PC-3 (cell line): ENCODE measurements at regions of chr10 and their contacts with region 1.

Region 1: GRCh38 chr10:97463363-97464132 is 17.6 kb downstream of the ZDHHC16 start:
- DNase-seq: peak; percentile 72
- ATAC-seq: peak; percentile 59
- H3K4me3 ChIP-seq: no peak overlapping the region
- H3K27ac ChIP-seq: no peak overlapping the region
- H3K4me1 ChIP-seq: peaks cover 11% of the 10 kb centered on the region
- H3K27me3 ChIP-seq: no peaks in the 10 kb centered on the region
- CTCF ChIP-seq: peak; percentile 84

Region 2: DNA sequence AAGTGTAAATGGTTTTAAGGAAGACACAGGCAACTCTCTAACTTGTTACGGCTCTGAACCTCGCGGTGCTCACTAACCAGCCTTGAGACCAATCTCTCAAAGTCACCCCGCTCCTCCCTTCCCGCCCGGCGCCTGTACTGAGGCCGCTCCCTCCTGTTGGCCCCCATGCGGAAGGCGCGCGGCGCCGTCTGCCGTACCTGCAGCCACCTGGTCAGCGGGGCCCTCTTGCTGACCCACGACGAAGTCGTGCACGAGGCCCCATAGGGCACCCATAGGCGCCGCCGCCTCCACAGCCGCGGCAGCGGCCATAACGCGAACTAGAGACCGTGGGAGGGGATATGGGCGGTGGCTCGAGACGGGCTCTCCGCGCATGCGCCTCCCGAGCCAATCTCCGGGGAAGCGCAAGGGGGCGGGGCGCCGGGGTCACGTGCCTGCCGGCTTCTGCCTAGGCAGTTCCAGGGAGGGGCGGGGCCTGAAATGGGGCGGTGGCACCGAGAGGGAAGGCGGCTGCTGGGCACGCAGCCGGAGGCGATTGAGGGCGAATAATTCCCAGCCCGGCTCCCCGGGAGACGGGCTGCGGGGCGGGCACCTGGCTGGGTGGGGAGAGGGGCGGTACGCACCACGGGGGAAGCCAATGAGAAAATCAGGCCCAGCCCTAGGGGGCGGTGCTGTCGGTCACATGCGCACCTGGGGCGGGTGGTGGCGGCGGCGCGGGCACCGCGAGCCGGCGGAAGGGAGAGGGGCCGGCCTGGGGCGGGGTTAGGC is 34.7 kb after region 1 on chr10 and contains the start of gene MMS19:
- CTCF ChIA-PET with region 1: no interaction called
- POLR2A ChIA-PET with region 1: no interaction called
- intact Hi-C with region 1: loop called (anchors 5 kb)
- DNase-seq: peak; percentile 93
- ATAC-seq: peak; percentile 60
- H3K4me3 ChIP-seq: peak within 1 kb of the TSS; percentile 96
- H3K27ac ChIP-seq: peak within 1 kb of the TSS; percentile 85
- H3K4me1 ChIP-seq: peaks cover 19% of the 10 kb centered on the region
- H3K27me3 ChIP-seq: no peaks in the 10 kb centered on the region
- CTCF ChIP-seq: no peak
- total RNA-seq, gene MMS19: 65.5 and 78.2 TPM in 2 replicates

Region 3: GRCh38 chr10:97534746-97535367 is 71.3 kb after region 1 on chr10:
- CTCF ChIA-PET with region 1: interaction called, 3 read pairs
- POLR2A ChIA-PET with region 1: no interaction called
- intact Hi-C with region 1: loop called (anchors 5 kb)
- DNase-seq: peak; percentile 42
- ATAC-seq: 0 out of 2 replicates have a peak, but pooled peaks have one; percentile 30
- H3K4me3 ChIP-seq: no peak overlapping the region
- H3K27ac ChIP-seq: no peak overlapping the region
- H3K4me1 ChIP-seq: peaks cover 11% of the 10 kb centered on the region
- H3K27me3 ChIP-seq: no peaks in the 10 kb centered on the region
- CTCF ChIP-seq: peak; percentile 74

Region 4: GRCh38 chr10:97553575-97554031 is 90.1 kb after region 1 on chr10:
- CTCF ChIA-PET with region 1: no interaction called
- POLR2A ChIA-PET with region 1: no interaction called
- intact Hi-C with region 1: loop called (anchors 1 kb)
- DNase-seq: peak; percentile 71
- ATAC-seq: peak; percentile 99
- H3K4me3 ChIP-seq: no peak overlapping the region
- H3K27ac ChIP-seq: no peak overlapping the region
- H3K4me1 ChIP-seq: peaks cover 7% of the 10 kb centered on the region
- H3K27me3 ChIP-seq: no peaks in the 10 kb centered on the region
- CTCF ChIP-seq: peak; percentile 76